ENCODE measurements at regions of chr9 and their contacts with region 1.

Region 1: GRCh38 chr9:36457836-36458429 is 57.9 kb upstream of the RNF38 start:
- DNase-seq: no peak
- H3K4me3 Mint-ChIP-seq: peak overlapping the region; percentile 48
- H3K27ac Mint-ChIP-seq: peak overlapping the region; percentile 69
- H3K4me1 Mint-ChIP-seq: peaks cover 51% of the 10 kb centered on the region
- H3K27me3 Mint-ChIP-seq: no peaks in the 10 kb centered on the region

Region 2: DNA sequence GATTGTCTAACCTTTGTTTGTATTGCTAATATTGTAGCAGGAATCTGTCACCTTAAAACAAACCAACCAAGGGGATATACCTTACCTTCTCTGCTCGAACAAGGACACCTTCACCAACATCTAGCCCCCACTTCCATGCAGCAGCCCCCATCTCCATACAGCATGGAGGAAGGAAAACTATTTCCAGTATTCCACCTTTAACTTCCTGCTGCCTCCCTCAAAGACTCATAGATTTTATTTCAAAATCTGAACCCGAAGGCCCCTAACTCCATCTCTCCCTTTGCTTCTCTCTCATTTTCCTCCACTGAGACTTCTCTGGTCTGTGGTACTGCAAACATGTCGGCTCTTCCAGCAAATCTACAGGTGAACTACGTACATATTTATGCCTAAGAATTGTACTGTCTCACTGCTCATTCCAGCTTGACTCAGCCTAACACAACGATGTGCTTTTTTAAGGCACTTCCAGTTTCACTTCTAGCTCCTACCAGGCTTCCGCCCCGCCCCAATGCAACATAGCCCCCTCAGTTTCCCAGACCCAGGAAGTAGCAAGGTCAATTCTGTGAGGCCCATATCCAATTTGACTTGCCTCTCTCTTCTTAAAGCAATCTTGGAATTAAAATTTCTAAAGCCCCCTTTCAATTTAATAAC is 12.8 kb after region 1 on chr9:
- intact Hi-C with region 1: loop called (anchors 1 kb)
- DNase-seq: peak; percentile 54
- H3K4me3 Mint-ChIP-seq: peak overlapping the region; percentile 80
- H3K27ac Mint-ChIP-seq: peak overlapping the region; percentile 86
- H3K4me1 Mint-ChIP-seq: peaks cover 29% of the 10 kb centered on the region
- H3K27me3 Mint-ChIP-seq: no peaks in the 10 kb centered on the region

Region 3: DNA sequence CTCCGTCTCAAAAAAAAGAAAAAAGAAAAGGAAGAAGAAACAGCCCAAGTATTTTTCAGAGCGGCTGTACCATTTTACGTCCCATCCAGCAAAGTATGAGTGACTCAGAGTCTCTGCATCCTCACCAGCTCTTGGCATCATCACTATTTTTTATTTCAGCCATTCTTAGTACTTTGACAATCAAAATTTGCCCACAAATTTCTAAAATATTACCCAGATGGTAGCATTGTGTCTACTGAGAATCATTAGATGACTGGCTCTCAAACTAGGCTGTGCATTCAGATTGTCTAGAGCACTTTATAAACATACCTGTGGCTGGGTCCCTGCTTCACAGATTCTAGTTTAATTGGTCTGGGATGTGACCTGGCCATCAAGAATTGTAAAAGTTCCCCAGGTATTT is 93.2 kb after region 1 on chr9:
- intact Hi-C with region 1: no loop called
- DNase-seq: no peak
- H3K4me3 Mint-ChIP-seq: no peak overlapping the region
- H3K27ac Mint-ChIP-seq: no peak overlapping the region
- H3K4me1 Mint-ChIP-seq: no peaks in the 10 kb centered on the region
- H3K27me3 Mint-ChIP-seq: peaks cover 25% of the 10 kb centered on the region

Region 4: GRCh38 chr9:36924071-36924470 is 466.1 kb after region 1 on chr9:
- intact Hi-C with region 1: loop called (anchors 1 kb)
- DNase-seq: peak; percentile 12
- H3K4me3 Mint-ChIP-seq: no peak overlapping the region
- H3K27ac Mint-ChIP-seq: peak overlapping the region; percentile 77
- H3K4me1 Mint-ChIP-seq: peaks cover 58% of the 10 kb centered on the region
- H3K27me3 Mint-ChIP-seq: no peaks in the 10 kb centered on the region

Measured in activated T-helper 1 cell treated with anti-CD3 and anti-CD28 coated beads, Interleukin-12 subunit alpha, Interleukin-12 subunit beta, Interleukin-2, Interleukin-4 antibody, amounts not matched to agents 30 ng/mL and 10 ng/mL and 1 ng/mL, durations not matched to agents 14 hours and 24 hours and 36 hours (primary cell).